Sigmoid colon (tissue), 7 donors: ENCODE measurements at regions of chr2 and their contacts with region 1.

Region 1: DNA sequence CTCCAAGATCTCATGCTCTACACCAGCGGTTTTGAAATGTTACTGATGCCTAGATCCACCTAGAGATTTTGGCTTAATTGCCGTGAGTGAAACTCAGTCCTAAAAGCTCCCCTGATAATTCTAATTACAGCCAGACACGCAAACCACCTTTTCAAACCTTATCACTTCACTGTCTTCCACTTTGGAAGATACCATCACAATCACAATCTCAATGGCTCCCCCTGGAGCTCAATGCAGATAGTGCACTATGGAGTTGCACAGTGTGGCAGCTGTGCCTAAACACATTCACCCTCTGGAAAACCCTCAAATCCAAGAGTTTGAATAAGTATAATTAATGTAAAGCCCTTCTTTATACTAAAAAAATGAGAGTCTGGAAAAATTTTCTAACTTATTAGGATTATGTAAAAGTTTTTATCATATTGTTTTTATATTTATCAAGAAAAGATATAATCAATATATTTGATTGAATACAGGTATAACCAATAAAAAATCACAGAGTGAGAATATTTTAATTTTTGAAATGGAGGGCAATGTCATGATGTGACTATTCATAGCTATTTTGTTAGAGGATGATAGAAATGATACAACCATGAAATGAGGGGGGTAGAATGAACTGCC is 102.9 kb upstream of the SLC8A1 start:
- DNase-seq: peak; percentile 70
- H3K4me3 ChIP-seq: no peak overlapping the region
- H3K27ac ChIP-seq: no peak overlapping the region
- H3K4me1 ChIP-seq: no peaks in the 10 kb centered on the region
- H3K27me3 ChIP-seq: no peaks in the 10 kb centered on the region
- CTCF ChIP-seq: peak; percentile 49 to 80 (median 60)
- EP300 ChIP-seq: no peak
- POLR2A ChIP-seq: no peak

Region 2: GRCh38 chr2:40244675-40245074 is 310.1 kb before region 1 on chr2:
- intact Hi-C with region 1: loop called (anchors 10 kb)
- DNase-seq: peak; percentile 77
- H3K4me3 ChIP-seq: no peak overlapping the region
- H3K27ac ChIP-seq: peak overlapping the region; percentile 1 to 75 (median 67)
- H3K4me1 ChIP-seq: peaks cover 0 to 63% (median 50%) of the 10 kb centered on the region in 4 donors
- H3K27me3 ChIP-seq: no peaks in the 10 kb centered on the region
- CTCF ChIP-seq: peak in 3 of 4 experiments; percentile 23 to 48 (median 40)
- EP300 ChIP-seq: no peak
- POLR2A ChIP-seq: no peak

Region 3: GRCh38 chr2:40341198-40341597 is 213.6 kb before region 1 on chr2:
- intact Hi-C with region 1: no loop called
- DNase-seq: no peak
- H3K4me3 ChIP-seq: no peak overlapping the region
- H3K27ac ChIP-seq: peak overlapping the region in 1 of 4 donors; percentile 85
- H3K4me1 ChIP-seq: peaks cover 0 to 54% (median 40%) of the 10 kb centered on the region in 4 donors
- H3K27me3 ChIP-seq: no peaks in the 10 kb centered on the region
- CTCF ChIP-seq: no peak
- EP300 ChIP-seq: no peak
- POLR2A ChIP-seq: no peak

Region 4: DNA sequence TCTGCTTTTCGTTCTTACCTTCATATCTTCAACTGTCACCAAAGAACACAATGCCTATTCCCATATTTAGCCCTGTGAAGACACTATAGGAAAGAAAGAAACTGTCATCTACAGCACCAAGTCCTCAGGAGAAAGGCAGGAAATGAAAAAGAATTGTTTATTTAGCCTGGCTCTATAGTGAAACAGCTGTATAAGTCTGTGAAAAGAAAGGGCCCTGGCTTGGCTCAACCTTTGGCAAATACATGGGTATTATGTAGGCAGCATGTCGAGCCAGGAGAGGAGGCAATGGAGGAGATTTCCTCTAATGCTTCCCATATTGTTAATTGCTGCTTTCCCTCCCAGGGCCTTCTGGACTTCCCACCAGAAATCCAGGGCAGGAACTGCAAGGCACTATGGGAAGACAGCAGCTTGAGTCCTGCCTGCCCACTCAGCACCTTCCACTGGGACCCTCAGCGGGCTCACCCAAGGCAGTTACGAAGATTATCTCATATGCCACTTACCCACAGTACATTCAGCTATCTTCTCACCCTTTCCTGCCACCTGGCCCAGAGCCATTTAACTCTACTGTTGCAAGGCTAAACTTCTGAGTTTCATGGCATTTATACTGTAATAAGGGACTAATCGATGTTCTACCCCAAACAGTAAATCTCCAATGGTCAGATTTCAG is 133.0 kb before region 1 on chr2:
- intact Hi-C with region 1: no loop called
- DNase-seq: peak; percentile 72
- H3K4me3 ChIP-seq: no peak overlapping the region
- H3K27ac ChIP-seq: peak overlapping the region; percentile 70 to 86 (median 76)
- H3K4me1 ChIP-seq: peaks cover 0 to 64% (median 48%) of the 10 kb centered on the region in 4 donors
- H3K27me3 ChIP-seq: no peaks in the 10 kb centered on the region
- CTCF ChIP-seq: no peak
- EP300 ChIP-seq: no peak
- POLR2A ChIP-seq: no peak